ENCODE measurements at regions of chr9 and their contacts with region 1.

Region 1: DNA sequence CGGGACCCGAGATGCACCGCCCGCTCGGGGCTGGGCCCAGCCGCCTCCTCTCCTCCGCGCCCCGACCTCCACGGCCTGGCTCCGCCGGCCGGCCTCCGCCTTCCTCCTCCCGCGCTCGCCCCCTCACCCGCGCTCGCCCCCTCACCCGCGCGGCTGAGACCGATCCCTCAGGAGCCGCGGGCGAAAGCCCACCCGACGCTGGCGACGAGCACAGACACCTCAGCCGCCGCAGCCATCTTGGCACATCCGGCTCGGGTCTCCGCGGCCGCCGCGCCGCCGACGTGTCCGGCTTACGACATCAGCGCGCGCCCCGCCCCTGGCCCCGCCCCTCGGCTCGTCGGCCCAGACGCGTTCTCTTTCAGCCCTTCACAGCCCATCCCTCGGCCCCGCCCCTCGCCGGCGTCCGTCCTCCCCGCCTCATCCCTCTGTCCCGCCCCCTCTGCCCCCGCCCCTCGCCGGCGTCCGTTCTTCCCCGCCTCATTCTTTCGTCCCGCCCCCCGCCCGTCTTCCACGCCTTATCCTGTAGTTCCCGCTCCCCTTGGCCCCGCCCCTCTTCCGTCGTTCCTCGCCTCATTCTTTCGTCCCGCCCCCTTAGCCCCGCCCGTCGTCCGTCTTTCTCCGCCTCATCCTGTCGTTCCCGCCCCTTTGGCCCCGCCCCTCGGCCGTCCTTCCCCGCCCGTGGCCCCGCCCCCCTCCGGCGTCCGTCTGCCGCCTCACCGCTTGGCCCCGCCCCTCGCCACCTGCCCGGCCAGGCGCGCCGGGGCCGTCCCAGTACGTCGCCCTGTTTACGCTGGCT is at the start of gene SEC16A:
- DNase-seq: peak; percentile 99 to 100
- H3K4me3 ChIP-seq: peak within 1 kb of the TSS; percentile 50 to 58
- H3K27ac ChIP-seq: peak within 1 kb of the TSS; percentile 99
- H3K4me1 ChIP-seq: peaks cover 7 to 16% of the 10 kb centered on the region in 2 donors
- H3K27me3 ChIP-seq: no peaks in the 10 kb centered on the region
- CTCF ChIP-seq: peak in 1 of 4 experiments; percentile 28
- POLR2A ChIP-seq: peak; percentile 80 to 94
- total RNA-seq, gene SEC16A: 18.8 to 73.2 (median 35.1) TPM

Region 2: DNA sequence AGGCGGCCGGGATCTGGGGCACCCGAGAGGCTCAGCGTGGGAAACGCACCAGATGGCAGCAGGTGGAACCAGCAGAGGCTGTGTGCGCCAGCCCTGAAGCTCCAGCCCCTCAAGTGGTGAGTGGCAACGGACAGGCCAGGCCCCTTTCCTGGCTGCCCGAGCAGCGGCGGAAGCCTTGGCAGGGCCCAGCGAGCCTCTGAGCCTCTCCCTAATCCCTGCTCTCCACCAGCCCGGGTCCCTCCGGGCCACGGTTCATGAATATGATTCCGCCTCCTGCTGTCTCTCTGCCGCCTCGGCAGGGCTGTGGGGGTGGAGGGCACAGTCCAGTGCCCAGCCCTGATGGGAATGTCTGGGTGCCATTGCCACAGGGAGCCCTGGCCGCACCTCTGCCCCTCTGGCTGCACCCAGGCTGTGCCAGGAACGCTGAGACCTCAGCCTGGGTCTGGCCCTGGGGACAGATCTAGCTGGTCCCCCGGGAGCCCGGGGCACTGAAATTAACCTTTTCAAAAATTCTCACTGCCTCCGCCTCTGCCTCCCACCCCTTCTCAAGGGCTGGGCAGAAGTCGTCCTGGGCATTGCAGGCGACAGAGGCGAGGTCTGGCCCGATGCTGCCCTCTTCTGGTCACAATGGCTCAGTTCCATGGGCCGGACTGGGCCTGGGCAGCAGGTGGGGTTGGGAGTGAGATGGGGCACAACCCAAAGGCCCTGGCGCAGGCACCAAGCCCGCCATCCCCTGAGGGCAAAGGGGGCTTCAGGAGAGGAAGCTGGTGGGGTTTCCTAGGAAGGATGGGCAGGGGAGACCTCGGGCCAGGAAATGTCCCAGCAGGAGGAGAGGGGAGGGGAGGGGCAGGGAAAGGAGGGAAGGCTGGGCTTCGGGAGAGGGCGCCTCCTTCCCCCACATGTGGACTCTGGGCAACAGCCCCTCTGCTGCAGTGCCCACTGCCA is 199.4 kb before region 1 on chr9:
- intact Hi-C with region 1: no loop called
- DNase-seq: peak; percentile 64 to 70
- H3K4me3 ChIP-seq: peak overlapping the region in 1 of 2 donors; percentile 8
- H3K27ac ChIP-seq: no peak overlapping the region
- H3K4me1 ChIP-seq: no peaks in the 10 kb centered on the region
- H3K27me3 ChIP-seq: no peaks in the 10 kb centered on the region
- CTCF ChIP-seq: peak; percentile 66 to 81 (median 69)
- POLR2A ChIP-seq: peak in 1 of 2 donors; percentile 9

Region 3: GRCh38 chr9:136545966-136546698 is 63.1 kb after region 1 on chr9 and contains the start of gene NOTCH1:
- intact Hi-C with region 1: loop called (anchors 10 kb)
- DNase-seq: peak; percentile 88 to 92
- H3K4me3 ChIP-seq: peak within 1 kb of the TSS; percentile 56 to 84
- H3K27ac ChIP-seq: peak within 1 kb of the TSS; percentile 90 to 91
- H3K4me1 ChIP-seq: peaks cover 6 to 23% of the 10 kb centered on the region in 2 donors
- H3K27me3 ChIP-seq: no peaks in the 10 kb centered on the region
- CTCF ChIP-seq: peak in 1 of 4 experiments; percentile 35
- POLR2A ChIP-seq: peak; percentile 57 to 58
- total RNA-seq, gene NOTCH1: 19.7 to 109 (median 35.6) TPM

Region 4: GRCh38 chr9:136631038-136632000 is 148.3 kb after region 1 on chr9:
- intact Hi-C with region 1: loop called (anchors 2 kb)
- DNase-seq: peak; percentile 74 to 79
- H3K4me3 ChIP-seq: no peak overlapping the region
- H3K27ac ChIP-seq: no peak overlapping the region
- H3K4me1 ChIP-seq: no peaks in the 10 kb centered on the region
- H3K27me3 ChIP-seq: no peaks in the 10 kb centered on the region
- CTCF ChIP-seq: peak; percentile 78 to 95 (median 88)
- POLR2A ChIP-seq: no peak

Region 5: GRCh38 chr9:136728080-136728547 is 245.1 kb after region 1 on chr9:
- intact Hi-C with region 1: no loop called
- DNase-seq: peak; percentile 86 to 90
- H3K4me3 ChIP-seq: peak overlapping the region; percentile 53 to 57
- H3K27ac ChIP-seq: peak overlapping the region; percentile 41 to 51
- H3K4me1 ChIP-seq: peaks cover 0 to 13% of the 10 kb centered on the region in 2 donors
- H3K27me3 ChIP-seq: no peaks in the 10 kb centered on the region
- CTCF ChIP-seq: peak; percentile 84 to 98 (median 97)
- POLR2A ChIP-seq: peak; percentile 89 to 98

Measured in uterus (tissue), 4 donors.